ENCODE measurements at regions of chr3 and their contacts with region 1.

Region 1: DNA sequence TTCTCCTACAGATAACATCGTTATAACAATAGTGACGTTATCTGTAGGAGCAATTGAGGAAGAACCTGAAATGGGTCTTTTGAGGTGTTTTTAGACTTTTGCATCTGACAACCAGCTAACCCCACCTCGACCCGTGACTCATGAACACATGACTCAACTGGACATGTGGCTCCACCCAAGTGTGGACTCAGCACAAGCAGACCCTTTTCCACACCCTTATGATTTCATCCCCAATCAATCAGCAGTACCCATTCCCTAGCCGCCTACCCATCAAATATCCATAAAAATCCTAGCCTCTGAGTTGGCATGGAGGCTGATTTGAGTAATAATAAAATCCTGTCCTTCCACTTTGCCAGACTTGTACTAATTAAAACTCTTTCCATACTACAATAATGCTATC is 255.4 kb downstream of the ARPP21 start:
- DNase-seq: no peak
- ATAC-seq: no peak
- H3K4me3 ChIP-seq: no peak overlapping the region
- H3K4me3 Mint-ChIP-seq: no peak overlapping the region
- H3K27ac ChIP-seq: no peak overlapping the region
- H3K27ac Mint-ChIP-seq: no peak overlapping the region
- H3K4me1 ChIP-seq: no peaks in the 10 kb centered on the region
- H3K4me1 Mint-ChIP-seq: no peaks in the 10 kb centered on the region
- H3K27me3 ChIP-seq: no peaks in the 10 kb centered on the region
- H3K27me3 Mint-ChIP-seq: no peaks in the 10 kb centered on the region
- CTCF ChIP-seq: no peak

Region 2: DNA sequence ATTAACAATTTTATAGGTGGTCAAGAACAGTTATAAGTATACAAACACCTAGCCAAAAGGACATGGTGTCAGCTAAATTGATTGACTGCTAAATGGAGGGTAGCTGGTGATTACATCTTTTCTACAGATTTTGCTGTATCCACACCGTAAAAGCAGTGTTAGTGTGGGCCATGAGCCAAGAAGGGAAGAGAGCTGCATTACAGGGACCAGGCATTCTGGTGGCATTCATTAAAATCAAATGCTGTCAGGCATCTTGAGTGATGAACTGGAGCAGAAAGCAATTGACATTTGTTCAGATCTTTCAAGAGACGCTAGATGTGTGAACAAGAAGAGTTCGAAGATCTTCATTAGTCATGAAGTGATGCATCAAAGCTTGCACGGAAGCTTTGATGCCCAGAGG is 77.5 kb before region 1 on chr3:
- CTCF ChIA-PET with region 1: no interaction called
- POLR2A ChIA-PET with region 1: no interaction called
- intact Hi-C with region 1: no loop called
- DNase-seq: no peak
- ATAC-seq: no peak
- H3K4me3 ChIP-seq: no peak overlapping the region
- H3K4me3 Mint-ChIP-seq: no peak overlapping the region
- H3K27ac ChIP-seq: no peak overlapping the region
- H3K27ac Mint-ChIP-seq: no peak overlapping the region
- H3K4me1 ChIP-seq: no peaks in the 10 kb centered on the region
- H3K4me1 Mint-ChIP-seq: no peaks in the 10 kb centered on the region
- H3K27me3 ChIP-seq: no peaks in the 10 kb centered on the region
- H3K27me3 Mint-ChIP-seq: no peaks in the 10 kb centered on the region
- CTCF ChIP-seq: no peak

Region 3: DNA sequence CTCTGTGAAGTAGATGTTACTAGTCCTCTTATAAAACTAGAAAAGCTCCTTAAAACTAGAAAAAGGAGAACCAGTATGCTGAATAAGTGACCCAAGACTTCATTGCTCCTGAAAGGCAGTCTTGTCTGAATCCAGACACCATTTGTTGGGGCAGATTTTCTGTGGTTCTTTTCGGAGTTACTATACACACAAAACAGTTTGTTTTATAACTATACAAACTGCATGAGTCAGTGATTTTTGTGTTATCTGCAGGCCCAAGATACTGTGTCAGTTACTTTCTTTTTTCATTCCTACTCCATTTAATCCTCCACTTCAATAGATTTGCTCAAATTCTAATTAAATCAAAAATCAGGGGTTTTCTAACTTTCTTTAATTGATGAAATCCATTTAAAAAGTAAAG is 10.8 kb before region 1 on chr3:
- CTCF ChIA-PET with region 1: no interaction called
- POLR2A ChIA-PET with region 1: no interaction called
- intact Hi-C with region 1: no loop called
- DNase-seq: no peak
- ATAC-seq: no peak
- H3K4me3 ChIP-seq: no peak overlapping the region
- H3K4me3 Mint-ChIP-seq: no peak overlapping the region
- H3K27ac ChIP-seq: no peak overlapping the region
- H3K27ac Mint-ChIP-seq: no peak overlapping the region
- H3K4me1 ChIP-seq: no peaks in the 10 kb centered on the region
- H3K4me1 Mint-ChIP-seq: no peaks in the 10 kb centered on the region
- H3K27me3 ChIP-seq: no peaks in the 10 kb centered on the region
- H3K27me3 Mint-ChIP-seq: no peaks in the 10 kb centered on the region
- CTCF ChIP-seq: no peak

Region 4: GRCh38 chr3:35908366-35909232 is 13.9 kb after region 1 on chr3:
- CTCF ChIA-PET with region 1: interaction called, 10 read pairs
- POLR2A ChIA-PET with region 1: no interaction called
- intact Hi-C with region 1: no loop called
- DNase-seq: peak in 8 of 9 experiments; percentile 4 to 54 (median 36)
- ATAC-seq: no peak
- H3K4me3 ChIP-seq: no peak overlapping the region
- H3K4me3 Mint-ChIP-seq: no peak overlapping the region
- H3K27ac ChIP-seq: no peak overlapping the region
- H3K27ac Mint-ChIP-seq: no peak overlapping the region
- H3K4me1 ChIP-seq: no peaks in the 10 kb centered on the region
- H3K4me1 Mint-ChIP-seq: no peaks in the 10 kb centered on the region
- H3K27me3 ChIP-seq: no peaks in the 10 kb centered on the region
- H3K27me3 Mint-ChIP-seq: no peaks in the 10 kb centered on the region
- CTCF ChIP-seq: peak; percentile 55